Activated B cell treated with CpG ODN at 0.5 μM for 24 hours (primary cell): ENCODE measurements at regions of chr3 and their contacts with region 1.

Region 1: GRCh38 chr3:55485211-55485791 is 1.8 kb downstream of the WNT5A start:
- DNase-seq: no peak
- ATAC-seq: no peak
- H3K4me3 Mint-ChIP-seq: peak overlapping the region; percentile 29
- H3K27ac Mint-ChIP-seq: no peak overlapping the region
- H3K4me1 Mint-ChIP-seq: peaks cover 34% of the 10 kb centered on the region
- H3K27me3 Mint-ChIP-seq: peaks cover 69% of the 10 kb centered on the region
- CTCF ChIP-seq: no peak

Region 2: GRCh38 chr3:55434789-55435188 is 50.5 kb before region 1 on chr3:
- CTCF ChIA-PET with region 1: no interaction called
- POLR2A ChIA-PET with region 1: no interaction called
- intact Hi-C with region 1: no loop called
- DNase-seq: no peak
- ATAC-seq: no peak
- H3K4me3 Mint-ChIP-seq: no peak overlapping the region
- H3K27ac Mint-ChIP-seq: no peak overlapping the region
- H3K4me1 Mint-ChIP-seq: no peaks in the 10 kb centered on the region
- H3K27me3 Mint-ChIP-seq: peaks cover 8% of the 10 kb centered on the region
- CTCF ChIP-seq: no peak

Region 3: DNA sequence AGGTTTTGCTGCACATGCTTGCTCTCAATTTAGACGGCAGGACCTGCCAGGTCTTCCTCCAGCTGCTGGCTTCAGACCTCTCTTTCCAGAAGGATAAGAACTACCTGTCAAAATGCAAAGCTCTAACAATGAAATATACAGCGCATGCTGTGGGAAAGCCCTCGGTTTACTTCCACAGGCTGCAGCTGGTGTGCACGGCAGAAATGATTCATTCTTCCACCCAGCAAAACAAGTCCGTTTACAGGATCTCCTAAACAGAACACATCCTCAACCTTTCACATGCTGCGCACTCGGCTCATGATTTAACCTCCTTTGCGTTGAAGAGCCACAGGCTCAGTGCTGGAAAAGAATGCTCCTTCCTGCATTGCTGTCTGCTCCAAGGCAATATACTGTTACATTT is 94.2 kb after region 1 on chr3:
- CTCF ChIA-PET with region 1: no interaction called
- POLR2A ChIA-PET with region 1: no interaction called
- intact Hi-C with region 1: no loop called
- DNase-seq: no peak
- ATAC-seq: no peak
- H3K4me3 Mint-ChIP-seq: no peak overlapping the region
- H3K27ac Mint-ChIP-seq: no peak overlapping the region
- H3K4me1 Mint-ChIP-seq: no peaks in the 10 kb centered on the region
- H3K27me3 Mint-ChIP-seq: no peaks in the 10 kb centered on the region
- CTCF ChIP-seq: no peak

Region 4: DNA sequence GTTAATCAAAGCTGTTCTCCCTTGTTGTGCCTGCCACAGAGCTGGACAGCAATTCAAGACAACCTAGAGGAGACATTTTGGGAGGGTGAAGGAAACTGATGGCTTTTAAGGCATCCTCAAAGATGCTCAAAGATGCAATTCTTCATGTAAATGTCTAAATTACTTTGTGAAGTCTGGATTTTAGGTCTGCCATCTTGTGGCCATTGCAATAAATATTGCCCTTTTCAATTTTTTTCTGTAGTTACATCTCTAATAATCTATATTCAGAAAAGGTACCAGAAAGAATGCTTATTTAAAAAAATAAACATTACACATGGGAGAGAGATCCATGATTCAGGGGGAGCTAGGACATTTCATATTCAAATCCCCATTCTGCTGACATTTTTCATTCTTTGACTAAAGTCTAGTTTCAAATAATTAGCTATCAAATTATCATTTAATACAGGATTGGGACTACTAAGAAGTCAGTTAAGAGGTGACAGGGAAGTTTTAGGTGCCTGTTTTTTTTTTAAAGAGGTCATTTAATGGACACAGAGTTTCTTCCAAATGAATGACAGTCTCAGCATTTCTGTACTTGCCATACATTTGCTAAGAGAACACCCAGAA is 261.6 kb after region 1 on chr3:
- CTCF ChIA-PET with region 1: no interaction called
- POLR2A ChIA-PET with region 1: no interaction called
- intact Hi-C with region 1: loop called (anchors 2 kb)
- DNase-seq: no peak
- ATAC-seq: no peak
- H3K4me3 Mint-ChIP-seq: no peak overlapping the region
- H3K27ac Mint-ChIP-seq: no peak overlapping the region
- H3K4me1 Mint-ChIP-seq: no peaks in the 10 kb centered on the region
- H3K27me3 Mint-ChIP-seq: no peaks in the 10 kb centered on the region
- CTCF ChIP-seq: no peak

Region 5: GRCh38 chr3:55897573-55898224 is 412.4 kb after region 1 on chr3:
- CTCF ChIA-PET with region 1: no interaction called
- POLR2A ChIA-PET with region 1: no interaction called
- intact Hi-C with region 1: loop called (anchors 2 kb)
- DNase-seq: no peak
- ATAC-seq: no peak
- H3K4me3 Mint-ChIP-seq: no peak overlapping the region
- H3K27ac Mint-ChIP-seq: no peak overlapping the region
- H3K4me1 Mint-ChIP-seq: no peaks in the 10 kb centered on the region
- H3K27me3 Mint-ChIP-seq: peaks cover 3% of the 10 kb centered on the region
- CTCF ChIP-seq: no peak

Region 6: GRCh38 chr3:56494686-56495322 is 1009.5 kb after region 1 on chr3:
- CTCF ChIA-PET with region 1: no interaction called
- POLR2A ChIA-PET with region 1: no interaction called
- intact Hi-C with region 1: loop called (anchors 5 kb)
- DNase-seq: no peak
- ATAC-seq: peak; percentile 84
- H3K4me3 Mint-ChIP-seq: no peak overlapping the region
- H3K27ac Mint-ChIP-seq: no peak overlapping the region
- H3K4me1 Mint-ChIP-seq: no peaks in the 10 kb centered on the region
- H3K27me3 Mint-ChIP-seq: peaks cover 17% of the 10 kb centered on the region
- CTCF ChIP-seq: peak; percentile 77